Caco-2 (cell line): ENCODE measurements at regions of chr11 and their contacts with region 1.

Region 1: DNA sequence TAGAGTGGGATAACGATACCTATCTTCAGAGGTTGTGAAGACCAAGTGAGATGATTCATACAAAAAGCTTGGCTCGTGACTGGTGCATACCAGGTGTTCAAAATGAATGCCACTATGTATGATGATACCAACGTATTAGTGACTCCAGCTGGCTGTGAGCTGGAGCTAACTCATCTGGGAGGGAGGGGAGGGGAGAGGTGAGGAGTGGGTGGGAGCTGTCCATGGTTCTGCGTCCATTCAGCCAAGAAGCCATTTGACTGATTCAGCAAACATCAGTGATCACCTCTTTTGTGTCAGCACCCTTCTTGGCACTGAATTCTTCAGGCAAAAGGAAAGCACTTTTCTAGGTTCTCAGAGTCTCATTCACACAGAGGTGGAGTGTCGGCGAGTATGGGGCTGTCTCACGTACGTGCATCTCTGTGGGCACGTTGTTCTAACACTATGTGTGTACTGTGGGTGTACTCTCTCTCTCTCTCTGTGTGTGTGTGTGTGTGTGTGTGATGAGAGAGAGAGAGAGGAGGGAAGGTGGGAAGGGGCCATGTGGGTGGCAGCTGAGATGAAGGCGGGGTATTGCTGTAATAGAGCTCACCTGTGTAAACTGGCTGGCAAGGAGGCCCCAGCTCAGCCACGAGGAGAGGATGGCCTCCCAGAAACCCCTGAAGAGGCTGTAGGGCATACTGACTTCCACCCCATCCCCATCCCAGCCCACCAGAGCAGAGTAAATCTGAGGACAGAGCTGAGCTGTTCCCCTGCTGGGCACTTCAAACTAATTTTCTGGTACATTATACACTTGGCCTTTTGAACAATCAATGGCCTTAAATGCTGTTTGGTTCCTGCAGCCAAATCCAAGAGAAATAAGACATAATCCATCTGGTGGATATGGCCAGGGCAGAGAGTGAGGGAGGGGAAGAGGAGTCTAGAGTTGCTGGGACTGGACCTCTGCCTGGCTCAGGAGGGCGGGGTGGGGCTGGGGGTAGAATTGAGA is 96.1 kb upstream of the THY1 start:
- DNase-seq: peak; percentile 68 to 69
- H3K4me3 ChIP-seq: no peak overlapping the region
- H3K4me3 Mint-ChIP-seq: no peak overlapping the region
- H3K27ac Mint-ChIP-seq: no peak overlapping the region
- H3K4me1 ChIP-seq: no peaks in the 10 kb centered on the region
- H3K4me1 Mint-ChIP-seq: no peaks in the 10 kb centered on the region
- H3K27me3 ChIP-seq: no peaks in the 10 kb centered on the region
- H3K27me3 Mint-ChIP-seq: peaks cover 33% of the 10 kb centered on the region
- CTCF ChIP-seq: no peak

Region 2: DNA sequence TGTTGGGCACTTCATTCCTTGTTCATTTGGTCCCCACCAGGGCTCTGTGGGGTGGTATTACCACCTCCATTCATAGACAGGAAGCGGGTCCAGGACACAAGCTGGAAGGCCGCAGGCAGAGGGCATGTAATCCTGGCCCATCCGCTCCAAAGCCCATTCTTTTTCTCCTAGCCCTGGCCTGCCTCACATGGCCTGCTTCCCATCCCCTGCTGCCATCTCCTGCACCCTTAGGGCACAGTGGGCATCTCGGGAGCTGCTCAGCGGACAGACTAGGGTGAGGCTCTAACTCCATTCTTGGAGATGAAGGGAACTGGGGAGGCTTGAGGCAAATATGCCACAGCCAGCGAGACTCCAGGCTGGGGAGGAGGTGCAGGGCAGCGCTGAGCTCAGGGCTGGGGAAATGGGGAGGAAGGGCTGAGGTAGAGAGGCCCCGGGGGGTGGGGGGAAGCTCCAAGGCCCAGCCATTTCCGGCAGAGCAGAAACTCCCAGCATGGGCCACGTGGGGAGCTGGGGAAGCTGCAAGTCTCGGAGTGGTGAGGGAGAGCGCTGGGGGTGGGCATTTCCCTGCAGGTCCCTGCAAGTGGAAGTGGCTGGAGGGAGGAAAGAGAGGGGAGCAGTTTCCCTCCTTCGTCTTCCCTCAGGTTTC is 579.0 kb before region 1 on chr11:
- CTCF ChIA-PET with region 1: no interaction called
- POLR2A ChIA-PET with region 1: no interaction called
- intact Hi-C with region 1: no loop called
- DNase-seq: no peak
- H3K4me3 ChIP-seq: no peak overlapping the region
- H3K4me3 Mint-ChIP-seq: no peak overlapping the region
- H3K27ac Mint-ChIP-seq: no peak overlapping the region
- H3K4me1 ChIP-seq: peaks cover 9% of the 10 kb centered on the region; the same call in 1 of the 2 replicates
- H3K4me1 Mint-ChIP-seq: peaks cover 6% of the 10 kb centered on the region
- H3K27me3 ChIP-seq: no peaks in the 10 kb centered on the region
- H3K27me3 Mint-ChIP-seq: no peaks in the 10 kb centered on the region
- CTCF ChIP-seq: no peak

Region 3: GRCh38 chr11:119493712-119494111 is 25.3 kb before region 1 on chr11:
- CTCF ChIA-PET with region 1: no interaction called
- POLR2A ChIA-PET with region 1: no interaction called
- intact Hi-C with region 1: loop called (anchors 1 kb)
- DNase-seq: peak; percentile 82 to 87
- H3K4me3 ChIP-seq: no peak overlapping the region
- H3K4me3 Mint-ChIP-seq: no peak overlapping the region
- H3K27ac Mint-ChIP-seq: no peak overlapping the region
- H3K4me1 ChIP-seq: no peaks in the 10 kb centered on the region
- H3K4me1 Mint-ChIP-seq: no peaks in the 10 kb centered on the region
- H3K27me3 ChIP-seq: 0 out of 2 replicates have a peak, but pooled peaks cover 1% of the 10 kb centered on the region
- H3K27me3 Mint-ChIP-seq: peaks cover 31% of the 10 kb centered on the region
- CTCF ChIP-seq: no peak

Region 4: DNA sequence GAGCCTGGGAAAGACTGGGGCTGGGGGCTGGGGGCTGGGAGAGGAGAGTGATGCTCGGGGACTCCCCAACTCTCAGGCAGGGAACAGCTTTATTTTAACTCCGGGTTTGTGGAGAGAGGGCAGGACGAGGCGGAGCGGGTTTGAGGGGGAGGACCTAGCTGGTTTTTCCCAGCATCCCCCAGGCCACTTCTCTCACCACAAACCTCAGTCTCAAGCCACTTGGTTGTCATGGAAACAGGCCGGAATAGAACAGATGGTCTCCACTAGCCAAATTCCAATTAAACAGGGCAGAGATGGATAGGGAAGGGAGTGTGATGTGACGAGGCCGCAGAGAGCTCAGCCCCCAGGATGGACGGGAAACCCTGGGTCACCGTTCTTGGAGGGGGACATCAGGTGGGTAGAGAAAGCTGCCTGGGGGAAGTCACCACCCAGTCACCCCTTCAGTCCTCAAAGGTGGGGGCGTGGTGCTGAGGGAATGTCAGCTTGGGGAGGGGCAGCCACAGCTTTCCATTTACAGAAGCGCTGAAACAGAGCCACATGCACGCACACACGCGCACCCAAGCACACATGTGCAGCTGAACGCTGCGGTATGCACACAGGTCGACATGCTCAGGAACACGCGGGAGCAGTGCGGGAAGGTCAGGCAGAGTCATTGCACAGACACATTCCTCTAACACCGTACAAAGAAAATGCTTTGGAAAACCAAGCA is 190.8 kb after region 1 on chr11:
- CTCF ChIA-PET with region 1: no interaction called
- POLR2A ChIA-PET with region 1: no interaction called
- intact Hi-C with region 1: no loop called
- DNase-seq: no peak
- H3K4me3 ChIP-seq: no peak overlapping the region
- H3K4me3 Mint-ChIP-seq: no peak overlapping the region
- H3K27ac Mint-ChIP-seq: peak overlapping the region; percentile 28
- H3K4me1 ChIP-seq: peaks cover 68% of the 10 kb centered on the region
- H3K4me1 Mint-ChIP-seq: peaks cover 81% of the 10 kb centered on the region
- H3K27me3 ChIP-seq: no peaks in the 10 kb centered on the region
- H3K27me3 Mint-ChIP-seq: no peaks in the 10 kb centered on the region
- CTCF ChIP-seq: no peak